Naive thymus-derived CD4-positive, alpha-beta T cell (primary cell): ENCODE measurements at regions of chrX and their contacts with region 1.

Region 1: DNA sequence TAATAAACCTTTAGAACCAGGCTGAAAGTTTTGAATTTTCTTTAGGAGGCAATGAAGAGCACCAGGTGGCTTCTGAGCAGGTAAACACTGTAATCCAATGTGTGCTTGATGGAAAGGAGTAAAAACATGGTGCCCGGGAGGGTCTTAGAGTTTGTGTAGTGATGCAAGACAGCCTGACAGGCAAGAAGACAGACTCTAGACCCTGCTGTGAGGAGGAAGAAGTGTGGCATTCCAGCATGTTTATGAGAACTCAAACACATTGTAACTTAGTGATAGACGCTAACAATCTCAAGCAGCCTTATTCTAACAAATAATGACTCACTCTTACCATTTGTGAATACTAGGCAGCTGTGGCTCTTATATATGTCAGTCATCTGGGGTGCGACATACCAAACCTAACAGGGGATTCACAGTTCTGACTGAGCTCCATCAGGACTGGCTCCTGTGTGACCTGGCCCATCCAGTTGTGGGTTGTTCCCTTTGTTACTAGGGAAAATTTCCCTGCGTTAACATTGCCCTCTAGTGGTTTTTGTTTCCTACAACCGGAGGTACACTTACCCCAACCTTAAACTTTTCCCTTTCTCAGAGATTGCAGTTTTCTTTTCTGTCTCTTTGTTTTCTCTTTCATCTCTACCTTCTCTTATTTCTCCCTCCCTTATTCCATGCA is 53.8 kb downstream of the VSIG4 start:
- DNase-seq: peak in 8 of 9 donors; percentile 28 to 61 (median 46)
- ATAC-seq: peak; percentile 92
- H3K4me3 ChIP-seq: no peak overlapping the region
- H3K4me3 Mint-ChIP-seq: peak overlapping the region in 1 of 10 donors; percentile 15
- H3K27ac ChIP-seq: no peak overlapping the region
- H3K27ac Mint-ChIP-seq: peak overlapping the region in 5 of 9 donors; percentile 51 to 83 (median 61)
- H3K4me1 ChIP-seq: peaks cover 0 to 20% of the 10 kb centered on the region in 2 donors
- H3K4me1 Mint-ChIP-seq: peaks cover 7 to 32% (median 26%) of the 10 kb centered on the region in 7 donors
- H3K27me3 ChIP-seq: no peaks in the 10 kb centered on the region
- H3K27me3 Mint-ChIP-seq: no peaks in the 10 kb centered on the region

Region 2: GRCh38 chrX:65581661-65582339 is 404.3 kb before region 1 on chrX:
- CTCF ChIA-PET with region 1: interaction called, 7 read pairs
- POLR2A ChIA-PET with region 1: no interaction called
- intact Hi-C with region 1: loop called (anchors 1 kb)
- DNase-seq: peak in 8 of 9 donors; percentile 33 to 72 (median 59)
- ATAC-seq: peak; percentile 79
- H3K4me3 ChIP-seq: no peak overlapping the region
- H3K4me3 Mint-ChIP-seq: no peak overlapping the region
- H3K27ac ChIP-seq: no peak overlapping the region
- H3K27ac Mint-ChIP-seq: peak overlapping the region in 1 of 9 donors; percentile 62
- H3K4me1 ChIP-seq: peaks cover 5 to 7% of the 10 kb centered on the region in 2 donors
- H3K4me1 Mint-ChIP-seq: peaks cover 2 to 13% (median 5%) of the 10 kb centered on the region in 7 donors
- H3K27me3 ChIP-seq: no peaks in the 10 kb centered on the region
- H3K27me3 Mint-ChIP-seq: no peaks in the 10 kb centered on the region

Region 3: GRCh38 chrX:65677954-65678469 is 308.0 kb before region 1 on chrX:
- CTCF ChIA-PET with region 1: interaction called, 4 read pairs
- POLR2A ChIA-PET with region 1: no interaction called
- intact Hi-C with region 1: loop called in 1 of 2 experiments (anchors 5 kb)
- DNase-seq: no peak
- ATAC-seq: no peak
- H3K4me3 ChIP-seq: no peak overlapping the region
- H3K4me3 Mint-ChIP-seq: peak overlapping the region; percentile 41 to 94 (median 71)
- H3K27ac ChIP-seq: no peak overlapping the region
- H3K27ac Mint-ChIP-seq: peak overlapping the region in 8 of 9 donors; percentile 23 to 88 (median 82)
- H3K4me1 ChIP-seq: peaks cover 66 to 82% of the 10 kb centered on the region in 2 donors
- H3K4me1 Mint-ChIP-seq: peaks cover 40 to 95% (median 85%) of the 10 kb centered on the region in 7 donors
- H3K27me3 ChIP-seq: no peaks in the 10 kb centered on the region
- H3K27me3 Mint-ChIP-seq: no peaks in the 10 kb centered on the region

Region 4: GRCh38 chrX:65723706-65724105 is 262.3 kb before region 1 on chrX:
- CTCF ChIA-PET with region 1: no interaction called
- POLR2A ChIA-PET with region 1: no interaction called
- intact Hi-C with region 1: loop called in 1 of 2 experiments (anchors 1 kb)
- DNase-seq: peak in 3 of 9 donors; percentile 16 to 50 (median 20)
- ATAC-seq: peak; percentile 59
- H3K4me3 ChIP-seq: no peak overlapping the region
- H3K4me3 Mint-ChIP-seq: peak overlapping the region; percentile 22 to 75 (median 60)
- H3K27ac ChIP-seq: peak overlapping the region; percentile 66
- H3K27ac Mint-ChIP-seq: peak overlapping the region; percentile 41 to 92 (median 84)
- H3K4me1 ChIP-seq: peaks cover 54 to 68% of the 10 kb centered on the region in 2 donors
- H3K4me1 Mint-ChIP-seq: peaks cover 45 to 95% (median 86%) of the 10 kb centered on the region in 7 donors
- H3K27me3 ChIP-seq: no peaks in the 10 kb centered on the region
- H3K27me3 Mint-ChIP-seq: no peaks in the 10 kb centered on the region

Region 5: DNA sequence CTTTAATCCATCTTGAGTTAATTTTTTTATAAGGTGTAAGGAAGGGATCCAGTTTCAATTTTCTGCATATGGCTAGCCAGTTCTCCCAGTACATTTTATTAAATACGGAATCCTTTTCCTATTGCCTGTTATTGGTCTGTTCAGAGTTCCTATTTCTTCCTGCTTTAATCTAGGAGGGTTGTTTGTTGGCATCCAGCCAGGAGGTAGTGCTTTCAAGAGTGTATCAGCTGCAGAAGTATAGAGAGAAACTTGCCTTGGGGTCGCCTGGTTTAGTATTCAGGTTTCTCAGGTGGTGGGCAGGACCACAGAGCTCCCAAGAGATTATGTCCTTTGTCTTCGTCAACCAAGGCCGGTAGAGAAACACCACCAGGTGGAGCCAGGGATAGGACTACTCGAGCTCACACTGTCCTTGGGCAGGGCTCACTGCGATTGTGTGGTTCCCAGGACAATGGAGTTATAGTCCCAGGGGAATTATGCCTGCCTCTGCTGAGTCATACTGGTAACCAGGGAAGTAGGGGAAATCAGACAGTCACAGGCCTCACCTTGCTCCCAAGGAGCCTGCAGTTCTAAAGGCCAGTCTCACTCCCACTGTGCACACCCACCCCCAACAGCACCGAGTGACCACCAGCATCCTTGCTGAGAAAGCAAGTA is 114.3 kb before region 1 on chrX:
- CTCF ChIA-PET with region 1: no interaction called
- POLR2A ChIA-PET with region 1: no interaction called
- intact Hi-C with region 1: loop called in 1 of 2 experiments (anchors 2 kb)
- DNase-seq: no peak
- ATAC-seq: no peak
- H3K4me3 ChIP-seq: no peak overlapping the region
- H3K4me3 Mint-ChIP-seq: no peak overlapping the region
- H3K27ac ChIP-seq: no peak overlapping the region
- H3K27ac Mint-ChIP-seq: no peak overlapping the region
- H3K4me1 ChIP-seq: peaks cover 0 to 19% of the 10 kb centered on the region in 2 donors
- H3K4me1 Mint-ChIP-seq: peaks cover 9 to 19% (median 11%) of the 10 kb centered on the region in 7 donors
- H3K27me3 ChIP-seq: no peaks in the 10 kb centered on the region
- H3K27me3 Mint-ChIP-seq: no peaks in the 10 kb centered on the region

Region 6: DNA sequence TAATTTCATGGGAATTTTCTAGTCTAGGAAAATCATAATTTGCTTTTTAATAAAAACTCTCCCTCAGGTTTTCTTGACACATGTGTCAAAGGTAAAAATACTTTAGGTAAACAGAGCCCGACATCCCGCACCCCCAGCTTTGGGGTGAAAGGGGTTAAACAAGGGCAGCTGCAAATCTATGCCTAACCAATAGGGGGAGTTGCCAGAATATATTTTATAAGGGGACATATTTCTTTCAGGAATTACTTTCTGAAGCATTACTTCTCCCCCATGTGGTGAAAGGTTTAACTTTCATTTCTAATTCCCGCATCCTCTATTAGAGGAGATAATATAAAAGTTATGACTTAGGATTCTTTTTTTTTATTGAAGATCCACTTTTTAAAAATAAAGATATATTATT is 124.1 kb after region 1 on chrX:
- CTCF ChIA-PET with region 1: no interaction called
- POLR2A ChIA-PET with region 1: no interaction called
- intact Hi-C with region 1: loop called (anchors 2 to 5 kb)
- DNase-seq: peak in 6 of 9 donors; percentile 7 to 37 (median 21)
- ATAC-seq: peak; percentile 66
- H3K4me3 ChIP-seq: no peak overlapping the region
- H3K4me3 Mint-ChIP-seq: no peak overlapping the region
- H3K27ac ChIP-seq: no peak overlapping the region
- H3K27ac Mint-ChIP-seq: no peak overlapping the region
- H3K4me1 ChIP-seq: no peaks in the 10 kb centered on the region
- H3K4me1 Mint-ChIP-seq: peaks cover 0 to 18% (median 7%) of the 10 kb centered on the region in 7 donors
- H3K27me3 ChIP-seq: no peaks in the 10 kb centered on the region
- H3K27me3 Mint-ChIP-seq: no peaks in the 10 kb centered on the region

Region 7: DNA sequence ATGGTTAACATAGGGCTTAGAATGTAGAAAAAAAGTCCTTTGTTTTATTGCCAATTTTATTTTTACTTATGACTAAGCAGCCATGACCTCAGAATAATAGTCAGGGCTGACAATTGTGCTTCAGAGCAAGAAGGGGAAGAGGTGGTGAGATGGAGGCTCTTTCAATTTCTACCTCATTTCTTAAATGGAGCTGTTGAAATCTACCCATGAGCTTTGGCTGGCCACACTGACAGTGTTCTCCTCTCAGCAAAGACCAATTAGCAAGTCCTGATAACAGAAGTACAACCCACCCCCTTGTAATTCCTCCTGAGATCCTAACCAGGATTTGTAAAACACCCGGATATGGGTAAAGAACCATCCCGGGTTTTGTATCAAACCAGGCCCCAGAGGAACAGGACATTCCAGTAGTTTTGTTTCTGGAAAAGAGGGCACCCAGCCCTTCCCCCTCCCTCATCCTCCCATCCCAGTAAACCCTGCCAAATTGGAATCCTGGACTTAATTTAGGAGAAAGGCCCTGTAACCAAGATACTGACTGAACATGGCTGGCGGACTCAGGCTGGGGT is 177.9 kb after region 1 on chrX and contains the start of gene HEPH:
- CTCF ChIA-PET with region 1: no interaction called
- POLR2A ChIA-PET with region 1: no interaction called
- intact Hi-C with region 1: no loop called
- DNase-seq: no peak
- ATAC-seq: no peak
- H3K4me3 ChIP-seq: no peak within 1 kb of the TSS
- H3K4me3 Mint-ChIP-seq: no peak within 1 kb of the TSS
- H3K27ac ChIP-seq: no peak within 1 kb of the TSS
- H3K27ac Mint-ChIP-seq: no peak within 1 kb of the TSS
- H3K4me1 ChIP-seq: no peaks in the 10 kb centered on the region
- H3K4me1 Mint-ChIP-seq: peaks cover 0 to 2% (median 0%) of the 10 kb centered on the region in 7 donors
- H3K27me3 ChIP-seq: no peaks in the 10 kb centered on the region
- H3K27me3 Mint-ChIP-seq: no peaks in the 10 kb centered on the region
- total RNA-seq, gene HEPH: 0.19 to 0.34 TPM in 2 of 5 experiments, not detected in the others